HEK293 (cell line): ENCODE measurements at regions of chr1 and their contacts with region 1.

Region 1: DNA sequence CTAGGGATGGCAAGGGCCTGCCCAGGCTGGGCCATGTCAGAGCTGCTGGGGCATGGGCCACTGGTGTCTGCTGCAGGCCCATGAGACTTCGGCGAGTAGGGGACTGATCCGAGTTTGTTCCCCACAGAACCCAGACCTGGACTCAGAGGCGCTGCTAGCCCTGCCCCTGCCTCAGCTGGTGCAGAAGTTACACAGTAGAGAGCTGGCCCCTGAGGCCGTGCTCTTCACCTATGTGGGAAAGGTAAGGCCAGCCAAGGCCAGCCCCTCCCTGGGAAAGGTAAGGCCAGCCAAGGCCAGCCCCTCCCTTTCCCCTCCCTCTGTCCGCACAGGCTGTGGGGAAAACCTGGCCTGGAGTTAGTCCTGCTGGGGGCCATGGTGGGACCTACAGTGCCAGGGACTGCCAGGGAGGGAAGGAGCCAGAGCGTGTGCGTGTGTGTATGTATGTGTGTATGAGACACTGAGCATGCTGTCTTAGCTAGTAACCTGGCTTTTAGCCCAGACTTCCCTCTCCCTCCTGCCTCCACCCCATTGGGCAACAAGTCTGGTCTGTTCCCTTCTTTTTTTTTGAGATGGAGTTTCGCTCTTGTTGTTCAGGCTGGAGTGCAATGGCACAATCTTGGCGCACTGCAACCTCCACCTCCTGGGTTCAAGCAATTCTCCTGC is 8.0 kb downstream of the FAAH start:
- H3K4me3 ChIP-seq: no peak overlapping the region
- H3K27ac ChIP-seq: no peak overlapping the region
- H3K4me1 ChIP-seq: no peaks in the 10 kb centered on the region
- CTCF ChIP-seq: no peak

Region 2: DNA sequence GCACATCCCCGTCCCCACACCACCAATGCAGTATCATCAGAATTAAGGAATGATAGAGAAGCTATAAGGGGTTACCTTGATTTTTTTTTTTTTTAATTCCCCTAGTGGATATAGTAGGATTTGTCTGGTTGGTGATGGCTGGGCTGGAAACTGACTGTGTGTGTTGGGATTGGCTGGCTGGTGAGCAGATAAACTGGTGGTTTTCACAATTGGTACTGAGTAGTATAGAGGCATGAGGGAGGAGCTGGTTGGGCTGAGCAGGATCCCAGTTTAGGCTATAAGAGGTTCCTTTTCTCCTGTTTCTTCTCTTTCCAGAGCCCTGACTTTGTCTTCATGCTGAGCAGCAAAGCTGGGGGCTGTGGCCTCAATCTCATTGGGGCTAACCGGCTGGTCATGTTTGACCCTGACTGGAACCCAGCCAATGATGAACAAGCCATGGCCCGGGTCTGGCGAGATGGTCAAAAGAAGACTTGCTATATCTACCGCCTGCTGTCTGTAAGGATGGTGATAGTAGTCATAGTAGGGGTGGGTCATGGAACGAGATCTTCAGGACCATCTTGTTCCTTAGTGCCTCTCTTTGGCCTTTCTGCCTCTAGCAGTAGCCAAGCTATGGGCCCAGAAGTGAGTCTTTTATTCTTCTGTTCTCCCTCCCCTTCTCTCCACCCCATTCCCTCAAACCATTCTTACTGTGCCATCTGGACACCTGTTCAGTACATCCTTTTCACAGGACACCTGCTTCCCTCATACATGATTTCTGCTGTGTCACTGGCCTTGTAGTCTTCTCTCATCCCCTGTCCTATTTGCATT is 127.7 kb before region 1 on chr1:
- CTCF ChIA-PET with region 1: no interaction called
- POLR2A ChIA-PET with region 1: no interaction called
- H3K4me3 ChIP-seq: no peak overlapping the region
- H3K27ac ChIP-seq: no peak overlapping the region
- H3K4me1 ChIP-seq: no peaks in the 10 kb centered on the region
- CTCF ChIP-seq: no peak

Region 3: GRCh38 chr1:46487818-46488218 is 85.7 kb after region 1 on chr1:
- CTCF ChIA-PET with region 1: interaction called, 12 read pairs
- POLR2A ChIA-PET with region 1: no interaction called
- H3K4me3 ChIP-seq: no peak overlapping the region
- H3K27ac ChIP-seq: no peak overlapping the region
- H3K4me1 ChIP-seq: no peaks in the 10 kb centered on the region
- CTCF ChIP-seq: 0 out of 2 replicates have a peak, but pooled peaks have one; percentile 40